ENCODE measurements at regions of chr14 and their contacts with region 1.

Region 1: DNA sequence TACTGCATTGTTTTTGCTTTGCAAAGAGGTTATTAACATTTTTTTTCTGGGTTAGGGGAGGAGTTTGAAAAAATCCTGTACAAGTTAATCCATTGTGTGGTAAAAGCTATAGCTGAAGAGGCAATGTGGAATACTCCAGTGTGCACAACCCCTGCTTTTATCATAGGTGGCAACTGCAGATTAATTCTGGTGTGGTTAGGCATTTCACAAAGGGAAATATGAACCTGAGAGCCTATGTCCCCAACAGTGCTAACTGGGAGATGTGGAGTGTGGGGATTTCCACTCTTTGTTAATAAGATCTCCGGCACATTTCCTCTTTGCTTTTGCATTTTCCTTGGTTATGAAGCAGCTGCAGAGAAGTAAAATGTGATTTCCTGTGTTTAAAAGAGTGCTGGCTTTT is 33.6 kb downstream of the PRORP start:
- DNase-seq: no peak
- H3K4me3 ChIP-seq: no peak overlapping the region
- H3K27ac ChIP-seq: no peak overlapping the region
- H3K4me1 ChIP-seq: peaks cover 0 to 4% (median 0%) of the 10 kb centered on the region in 4 experiments; a peak in 3 of 7 replicates
- H3K27me3 ChIP-seq: no peaks in the 10 kb centered on the region
- CTCF ChIP-seq: no peak
- EP300 ChIP-seq: no peak
- POLR2A ChIP-seq: no peak
- RAD21 ChIP-seq: no peak

Region 2: GRCh38 chr14:35079742-35080141 is 76.2 kb before region 1 on chr14:
- CTCF ChIA-PET with region 1: no interaction called
- POLR2A ChIA-PET with region 1: no interaction called
- DNase-seq: no peak
- H3K4me3 ChIP-seq: no peak overlapping the region
- H3K27ac ChIP-seq: no peak overlapping the region
- H3K4me1 ChIP-seq: no peaks in the 10 kb centered on the region
- H3K27me3 ChIP-seq: no peaks in the 10 kb centered on the region
- CTCF ChIP-seq: no peak
- EP300 ChIP-seq: no peak
- POLR2A ChIP-seq: no peak
- RAD21 ChIP-seq: no peak

Region 3: GRCh38 chr14:35140718-35141581 is 15.0 kb before region 1 on chr14:
- CTCF ChIA-PET with region 1: interaction called, 26 read pairs
- POLR2A ChIA-PET with region 1: no interaction called
- DNase-seq: no peak
- H3K4me3 ChIP-seq: no peak overlapping the region
- H3K27ac ChIP-seq: no peak overlapping the region
- H3K4me1 ChIP-seq: no peaks in the 10 kb centered on the region; a peak in 1 of 7 replicates
- H3K27me3 ChIP-seq: no peaks in the 10 kb centered on the region
- CTCF ChIP-seq: peak in 1 of 3 experiments; percentile 12; a peak in 1 of 4 replicates
- EP300 ChIP-seq: no peak
- POLR2A ChIP-seq: no peak
- RAD21 ChIP-seq: peak in 1 of 2 experiments; percentile 51; a peak in 3 of 4 replicates

Region 4: DNA sequence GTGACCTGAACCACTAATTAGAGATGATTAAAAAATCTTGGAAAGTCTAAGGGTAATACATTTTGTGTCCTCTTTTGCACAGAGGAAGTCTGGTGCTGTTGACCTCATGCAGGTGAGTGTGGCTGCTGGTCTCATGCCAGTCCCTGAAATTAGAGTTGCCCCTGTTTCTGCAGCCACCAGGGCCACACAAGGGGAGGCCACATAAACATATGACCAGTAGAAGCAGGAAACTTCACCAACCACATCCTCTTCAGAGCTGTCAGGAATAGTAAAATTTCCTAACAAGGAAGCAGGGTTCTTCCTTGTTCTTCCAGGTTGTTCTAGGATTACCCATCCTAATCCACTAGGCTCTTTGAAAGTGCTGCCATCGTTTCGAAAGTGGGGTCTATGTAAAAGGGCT is 164.5 kb after region 1 on chr14:
- CTCF ChIA-PET with region 1: no interaction called
- POLR2A ChIA-PET with region 1: no interaction called
- DNase-seq: no peak
- H3K4me3 ChIP-seq: no peak overlapping the region
- H3K27ac ChIP-seq: no peak overlapping the region
- H3K4me1 ChIP-seq: no peaks in the 10 kb centered on the region
- H3K27me3 ChIP-seq: no peaks in the 10 kb centered on the region
- CTCF ChIP-seq: no peak
- EP300 ChIP-seq: no peak
- POLR2A ChIP-seq: no peak
- RAD21 ChIP-seq: no peak

Measured in H1 (cell line).